ENCODE measurements at regions of chr11 and their contacts with region 1.

Region 1: GRCh38 chr11:71120490-71120896 is 131.9 kb downstream of the SHANK2 start:
- DNase-seq: peak; percentile 29
- H3K4me3 ChIP-seq: no peak overlapping the region
- H3K27ac ChIP-seq: no peak overlapping the region
- H3K4me1 ChIP-seq: no peaks in the 10 kb centered on the region
- CTCF ChIP-seq: peak; percentile 66

Region 2: GRCh38 chr11:70861559-70861958 is 258.9 kb before region 1 on chr11:
- CTCF ChIA-PET with region 1: no interaction called
- POLR2A ChIA-PET with region 1: no interaction called
- intact Hi-C with region 1: no loop called
- DNase-seq: no peak
- H3K4me3 ChIP-seq: no peak overlapping the region
- H3K27ac ChIP-seq: no peak overlapping the region
- H3K4me1 ChIP-seq: no peaks in the 10 kb centered on the region
- CTCF ChIP-seq: no peak

Region 3: GRCh38 chr11:71222318-71223080 is 102.0 kb after region 1 on chr11:
- CTCF ChIA-PET with region 1: no interaction called
- POLR2A ChIA-PET with region 1: no interaction called
- intact Hi-C with region 1: no loop called
- DNase-seq: no peak
- H3K4me3 ChIP-seq: no peak overlapping the region
- H3K27ac ChIP-seq: no peak overlapping the region
- H3K4me1 ChIP-seq: no peaks in the 10 kb centered on the region
- CTCF ChIP-seq: no peak

Region 4: GRCh38 chr11:71342951-71343827 is 222.7 kb after region 1 on chr11:
- CTCF ChIA-PET with region 1: no interaction called
- POLR2A ChIA-PET with region 1: no interaction called
- intact Hi-C with region 1: loop called (anchors 10 kb)
- DNase-seq: peak; percentile 62
- H3K4me3 ChIP-seq: no peak overlapping the region
- H3K27ac ChIP-seq: no peak overlapping the region
- H3K4me1 ChIP-seq: no peaks in the 10 kb centered on the region
- CTCF ChIP-seq: peak; percentile 78